Aorta (tissue), 5 donors: ENCODE measurements at regions of chr7 and their contacts with region 1.

Region 1: GRCh38 chr7:774161-775109 is 47.4 kb upstream of the PRKAR1B start:
- DNase-seq: peak; percentile 70 to 89
- ATAC-seq: peak; percentile 66
- H3K4me3 ChIP-seq: no peak overlapping the region
- H3K27ac ChIP-seq: no peak overlapping the region
- H3K4me1 ChIP-seq: no peaks in the 10 kb centered on the region
- H3K27me3 ChIP-seq: no peaks in the 10 kb centered on the region

Region 2: GRCh38 chr7:322111-322671 is 452.2 kb before region 1 on chr7:
- intact Hi-C with region 1: loop called (anchors 1 to 2 kb)
- DNase-seq: peak; percentile 62 to 92
- ATAC-seq: peak; percentile 88
- H3K4me3 ChIP-seq: no peak overlapping the region
- H3K27ac ChIP-seq: no peak overlapping the region
- H3K4me1 ChIP-seq: no peaks in the 10 kb centered on the region
- H3K27me3 ChIP-seq: no peaks in the 10 kb centered on the region

Region 3: DNA sequence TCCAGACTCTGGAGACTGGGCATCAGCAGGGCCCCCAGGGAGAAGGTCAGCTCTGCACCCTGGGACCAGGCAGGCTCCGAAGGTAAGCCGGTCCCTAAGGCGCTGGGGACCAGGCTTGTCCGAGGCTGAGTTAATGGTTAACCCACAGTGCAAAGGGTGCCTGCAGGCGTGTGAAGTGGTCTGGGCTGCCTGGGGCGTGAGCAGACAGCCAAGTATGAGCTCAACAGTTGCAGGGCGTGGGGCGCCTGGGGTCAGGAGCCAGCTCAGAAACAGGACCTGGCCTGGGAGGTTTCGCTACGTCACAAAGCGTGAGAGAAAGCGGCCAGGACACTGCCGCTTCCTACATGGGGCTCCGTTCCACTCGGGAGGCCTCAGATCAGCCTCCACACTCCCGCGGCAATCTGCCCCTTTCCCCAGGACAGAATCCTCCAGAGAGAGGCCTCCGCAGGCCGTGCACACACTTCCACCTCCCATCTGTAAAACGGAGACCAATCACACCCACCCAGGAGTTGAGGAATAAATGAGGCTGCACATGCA is 270.8 kb before region 1 on chr7:
- intact Hi-C with region 1: loop called in 1 of 2 experiments (anchors 5 kb)
- DNase-seq: peak; percentile 62 to 83
- ATAC-seq: peak; percentile 55
- H3K4me3 ChIP-seq: no peak overlapping the region
- H3K27ac ChIP-seq: peak overlapping the region in 1 of 2 donors; percentile 58
- H3K4me1 ChIP-seq: no peaks in the 10 kb centered on the region
- H3K27me3 ChIP-seq: no peaks in the 10 kb centered on the region

Region 4: GRCh38 chr7:805261-805660 is 30.8 kb after region 1 on chr7:
- intact Hi-C with region 1: no loop called
- DNase-seq: no peak
- ATAC-seq: peak; percentile 39
- H3K4me3 ChIP-seq: no peak overlapping the region
- H3K27ac ChIP-seq: peak overlapping the region in 1 of 2 donors; percentile 64
- H3K4me1 ChIP-seq: no peaks in the 10 kb centered on the region
- H3K27me3 ChIP-seq: no peaks in the 10 kb centered on the region

Region 5: GRCh38 chr7:831596-832166 is 57.2 kb after region 1 on chr7:
- intact Hi-C with region 1: no loop called
- DNase-seq: no peak
- ATAC-seq: peak; percentile 80
- H3K4me3 ChIP-seq: peak overlapping the region; percentile 0 to 7
- H3K27ac ChIP-seq: peak overlapping the region; percentile 4 to 99
- H3K4me1 ChIP-seq: peaks cover 2 to 4% of the 10 kb centered on the region in 2 donors
- H3K27me3 ChIP-seq: no peaks in the 10 kb centered on the region

Region 6: DNA sequence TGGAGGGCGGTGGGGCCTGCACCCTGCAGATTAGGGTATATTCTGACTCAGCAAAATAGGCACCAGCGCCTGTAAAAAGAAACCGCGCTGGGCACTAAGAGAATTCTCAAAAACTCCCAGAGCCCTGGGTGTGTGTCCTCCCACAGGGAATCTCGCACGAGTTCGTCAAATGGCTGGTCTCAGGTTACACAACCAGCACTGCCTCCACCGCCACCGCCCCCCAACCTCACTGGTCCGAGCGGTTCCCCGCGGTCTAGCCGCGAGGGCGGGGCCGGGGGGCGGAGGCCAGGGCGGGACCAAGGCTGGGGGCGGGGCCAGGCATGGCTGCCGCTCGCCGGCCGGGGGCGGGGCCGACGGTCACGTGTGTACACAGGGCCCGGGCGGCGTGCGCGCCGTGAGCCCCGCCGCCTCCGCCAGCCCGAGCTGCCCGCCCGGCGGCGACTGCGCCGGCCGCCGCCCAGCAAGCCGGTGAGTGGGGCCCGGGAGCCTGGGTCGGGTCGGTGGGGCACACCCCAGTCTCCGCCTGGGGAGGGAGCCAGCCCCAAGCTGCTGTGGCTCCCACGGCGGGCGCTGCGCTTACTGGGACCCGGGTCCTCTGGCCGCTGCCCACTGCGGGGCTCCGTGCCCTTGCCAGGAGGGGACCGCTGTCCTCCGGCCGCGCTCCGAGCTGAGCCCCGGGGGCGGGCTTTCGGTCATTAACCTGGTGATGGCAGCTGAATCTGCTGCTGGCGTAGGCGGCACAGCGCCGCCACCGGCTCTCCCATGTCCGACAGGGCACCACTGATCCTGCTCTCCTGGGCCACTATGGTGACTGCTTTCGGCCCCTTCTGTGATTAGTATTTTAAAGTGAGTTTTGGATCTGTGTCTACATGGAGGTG is 270.0 kb after region 1 on chr7 and contains the start of gene GPR146:
- intact Hi-C with region 1: no loop called
- DNase-seq: peak; percentile 98 to 99
- ATAC-seq: peak; percentile 99
- H3K4me3 ChIP-seq: peak within 1 kb of the TSS; percentile 41 to 80
- H3K27ac ChIP-seq: peak within 1 kb of the TSS in 1 of 2 donors; percentile 85
- H3K4me1 ChIP-seq: no peaks in the 10 kb centered on the region
- H3K27me3 ChIP-seq: no peaks in the 10 kb centered on the region
- total RNA-seq, gene GPR146: 17.4 to 44.2 TPM